Common myeloid progenitor, CD34-positive (primary cell): ENCODE measurements at regions of chr12 and their contacts with region 1.

Region 1: DNA sequence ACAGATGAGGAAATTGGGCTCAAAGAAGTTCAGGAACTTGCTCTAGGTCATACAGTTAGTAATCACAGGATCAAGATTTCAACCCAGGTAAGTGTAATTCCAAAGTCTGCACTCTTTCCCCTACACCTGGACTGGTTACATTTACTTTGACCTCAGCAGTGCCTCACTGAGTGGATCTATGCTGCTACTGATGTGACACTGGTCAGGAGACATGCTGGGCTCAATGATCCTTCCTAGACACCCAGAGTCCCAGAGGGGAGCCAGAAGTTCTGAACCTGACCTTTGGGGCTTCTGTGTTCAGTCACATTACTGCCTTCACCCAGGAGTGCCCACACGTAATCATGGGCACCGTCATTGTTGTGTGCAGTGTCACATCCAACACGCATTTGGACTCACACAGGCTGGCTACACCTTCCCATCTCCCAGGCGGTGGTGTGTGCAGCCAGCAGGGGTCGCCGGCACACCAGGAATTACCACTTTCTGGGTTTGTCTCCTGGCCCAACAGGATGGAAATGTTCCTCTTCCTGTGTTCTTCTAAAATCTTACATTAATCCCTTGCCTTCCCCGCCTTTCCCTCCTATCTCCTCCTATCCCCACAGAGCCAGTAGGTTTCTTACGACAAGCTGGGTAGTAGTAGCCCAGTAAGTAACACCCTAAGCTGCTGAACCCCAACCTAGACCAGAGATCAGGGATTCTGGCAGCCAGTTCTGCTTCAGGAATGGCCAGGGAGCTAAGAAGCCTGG is 25.6 kb downstream of the CALCOCO1 start:
- DNase-seq: peak; percentile 56 to 66 (median 57)
- H3K4me3 ChIP-seq: no peak overlapping the region
- H3K27ac ChIP-seq: no peak overlapping the region
- H3K4me1 ChIP-seq: peaks cover 0 to 5% (median 2%) of the 10 kb centered on the region in 4 experiments
- H3K27me3 ChIP-seq: peaks cover 20 to 87% (median 40%) of the 10 kb centered on the region in 5 experiments

Region 2: GRCh38 chr12:53713541-53713940 is 11.9 kb after region 1 on chr12:
- CTCF ChIA-PET with region 1: interaction called, 13 read pairs
- POLR2A ChIA-PET with region 1: no interaction called
- DNase-seq: no peak
- H3K4me3 ChIP-seq: no peak overlapping the region
- H3K27ac ChIP-seq: no peak overlapping the region
- H3K4me1 ChIP-seq: no peaks in the 10 kb centered on the region
- H3K27me3 ChIP-seq: peaks cover 0 to 6% (median 1%) of the 10 kb centered on the region in 5 experiments

Region 3: DNA sequence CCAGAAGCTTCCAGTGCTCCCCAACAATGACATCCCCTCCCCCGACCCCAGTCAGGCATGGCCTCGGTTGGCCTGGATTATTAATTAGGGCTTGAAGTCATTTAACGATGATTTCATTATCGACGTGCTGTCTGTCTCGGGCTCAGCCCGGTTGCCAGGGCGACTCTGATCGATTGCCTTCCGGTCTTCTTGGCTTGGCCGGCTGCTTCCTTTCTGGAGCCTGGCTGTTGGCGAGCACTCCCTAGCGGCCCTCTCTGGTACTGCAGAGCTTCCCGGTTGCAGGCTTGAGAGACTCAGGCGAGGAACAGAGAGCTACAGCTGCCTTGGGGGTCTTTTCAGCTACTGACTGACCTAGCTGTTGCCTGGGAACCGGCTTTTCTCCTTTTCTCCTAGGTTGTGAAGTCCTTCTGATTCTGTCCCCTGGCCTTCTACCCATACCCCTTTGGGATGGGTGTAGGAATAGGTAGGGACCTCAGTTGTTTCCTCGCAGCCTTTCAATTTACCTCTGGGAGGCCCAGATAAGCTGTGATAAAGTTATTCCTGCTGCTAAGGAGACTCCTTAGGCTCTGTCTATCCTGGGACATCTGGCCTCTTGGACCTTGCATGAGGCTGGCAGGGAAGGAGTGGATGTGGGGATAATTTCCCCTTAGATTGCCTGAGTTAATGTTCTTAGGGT is 55.5 kb after region 1 on chr12:
- CTCF ChIA-PET with region 1: interaction called, 10 read pairs
- POLR2A ChIA-PET with region 1: no interaction called
- DNase-seq: peak; percentile 71 to 82 (median 79)
- H3K4me3 ChIP-seq: peak overlapping the region in 2 of 7 experiments; percentile 48 to 50
- H3K27ac ChIP-seq: no peak overlapping the region
- H3K4me1 ChIP-seq: peaks cover 1 to 64% (median 28%) of the 10 kb centered on the region in 4 experiments
- H3K27me3 ChIP-seq: peaks cover 6 to 82% (median 25%) of the 10 kb centered on the region in 5 experiments

Region 4: DNA sequence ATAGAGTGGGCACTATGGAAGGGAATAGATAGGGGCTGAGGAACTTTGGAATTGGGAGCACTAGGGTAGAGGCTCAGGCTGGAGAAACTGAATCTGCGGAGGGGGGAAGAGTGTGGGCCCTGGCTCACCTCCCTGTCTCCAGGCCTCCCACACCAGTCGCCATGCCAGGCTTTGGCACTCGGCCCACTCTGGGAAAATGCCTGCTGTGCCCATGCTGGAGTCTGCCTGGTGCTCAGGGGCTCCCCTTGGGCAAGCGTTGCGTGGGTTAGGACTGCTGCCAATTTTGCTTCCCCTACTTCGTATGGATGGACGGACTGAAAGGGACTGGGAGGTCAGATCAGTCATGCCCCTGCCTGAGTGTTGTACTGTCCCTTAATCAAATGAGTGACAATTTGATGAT is 84.7 kb after region 1 on chr12:
- CTCF ChIA-PET with region 1: no interaction called
- POLR2A ChIA-PET with region 1: no interaction called
- DNase-seq: no peak
- H3K4me3 ChIP-seq: no peak overlapping the region
- H3K27ac ChIP-seq: no peak overlapping the region
- H3K4me1 ChIP-seq: no peaks in the 10 kb centered on the region
- H3K27me3 ChIP-seq: peaks cover 16 to 75% (median 26%) of the 10 kb centered on the region in 5 experiments